K562 (cell line): ENCODE measurements at regions of chr12 and their contacts with region 1.

Region 1: DNA sequence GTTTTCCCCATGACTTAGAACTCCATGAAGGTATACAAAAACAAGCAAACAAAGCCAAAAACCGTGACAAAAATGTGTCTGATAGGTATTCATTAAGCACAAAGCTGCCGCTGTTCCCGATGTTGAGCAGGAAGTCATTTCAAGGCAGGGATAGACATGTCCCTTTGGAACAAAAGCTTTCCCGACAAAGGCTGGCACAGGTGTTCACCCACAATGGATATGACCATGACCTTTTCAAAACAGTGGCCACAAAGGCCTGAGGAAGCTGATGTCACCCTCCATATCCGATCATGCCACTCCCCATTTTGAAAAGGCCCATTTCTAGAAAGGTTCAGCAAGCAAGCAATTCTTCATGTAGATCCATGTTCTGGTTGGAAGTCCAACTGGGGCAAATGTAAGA is 279.1 kb downstream of the BTG1 start:
- DNase-seq: no peak
- ATAC-seq: no peak
- H3K4me3 ChIP-seq: no peak overlapping the region
- H3K27ac ChIP-seq: no peak overlapping the region
- H3K4me1 ChIP-seq: no peaks in the 10 kb centered on the region
- H3K27me3 ChIP-seq: no peaks in the 10 kb centered on the region
- CTCF ChIP-seq: no peak
- EP300 ChIP-seq: no peak
- POLR2A ChIP-seq: no peak
- RAD21 ChIP-seq: no peak

Region 2: DNA sequence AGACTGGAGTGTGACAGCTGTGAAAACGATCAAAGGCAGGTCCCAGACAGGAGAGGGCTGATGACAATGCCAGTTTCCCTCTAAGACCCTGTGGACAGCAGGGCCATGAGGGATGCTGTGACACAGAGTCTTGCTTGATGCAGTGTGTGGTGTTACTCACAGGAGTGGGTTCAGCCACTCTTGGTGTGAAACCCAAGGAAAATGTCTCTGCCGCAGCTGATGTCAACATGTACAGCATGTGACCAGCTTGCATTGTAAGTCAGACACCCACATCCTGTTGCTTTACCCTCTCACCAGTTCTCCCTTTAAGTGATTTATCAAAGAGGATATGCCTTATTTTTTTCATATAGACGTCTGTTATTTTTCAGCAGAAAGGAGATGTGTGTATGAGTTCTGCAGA is 10.5 kb after region 1 on chr12:
- CTCF ChIA-PET with region 1: no interaction called
- POLR2A ChIA-PET with region 1: interaction called, 10 read pairs
- in situ Hi-C with region 1: no loop called
- intact Hi-C with region 1: no loop called
- DNase-seq: no peak
- ATAC-seq: no peak
- H3K4me3 ChIP-seq: no peak overlapping the region
- H3K27ac ChIP-seq: no peak overlapping the region
- H3K4me1 ChIP-seq: no peaks in the 10 kb centered on the region
- H3K27me3 ChIP-seq: no peaks in the 10 kb centered on the region
- CTCF ChIP-seq: no peak
- EP300 ChIP-seq: no peak
- POLR2A ChIP-seq: no peak
- RAD21 ChIP-seq: no peak

Region 3: DNA sequence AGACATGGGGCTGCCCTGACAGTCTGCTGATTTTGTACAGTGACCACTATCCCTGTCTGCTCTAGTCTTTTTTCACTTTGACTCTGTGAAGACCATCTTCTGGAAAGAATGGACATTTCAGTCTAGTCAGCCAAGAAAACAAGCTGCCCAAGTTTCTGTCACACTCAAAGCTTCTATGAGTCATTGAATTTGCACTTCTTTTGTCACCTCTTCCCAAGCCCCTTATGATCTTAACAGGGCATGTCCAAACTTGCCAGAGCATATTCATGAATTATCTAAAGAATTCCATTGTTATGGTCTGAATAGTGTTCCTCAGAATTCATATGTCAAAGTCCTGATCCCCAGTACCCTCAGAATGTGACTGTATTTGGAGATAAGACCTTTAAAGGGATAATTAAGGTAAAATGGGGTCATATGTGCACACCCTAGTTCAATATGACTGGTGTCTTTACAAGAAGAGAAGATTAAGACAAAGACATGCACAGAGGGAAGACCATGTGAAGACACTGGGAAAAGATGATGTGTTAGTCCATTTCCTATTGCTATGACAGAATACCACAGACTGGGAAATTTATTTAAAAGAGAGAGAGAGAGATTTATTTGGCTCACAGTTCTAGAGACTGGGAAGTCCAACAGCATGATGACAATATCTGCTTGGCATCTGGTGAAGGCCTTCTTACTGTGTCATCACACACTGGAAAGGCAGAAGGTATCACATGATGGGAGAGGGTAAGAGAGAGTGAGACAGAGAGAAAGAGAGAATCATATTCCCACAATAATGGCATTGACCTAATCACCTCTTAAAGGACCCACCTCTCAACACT is 36.5 kb after region 1 on chr12:
- CTCF ChIA-PET with region 1: no interaction called
- POLR2A ChIA-PET with region 1: no interaction called
- in situ Hi-C with region 1: no loop called
- intact Hi-C with region 1: no loop called
- DNase-seq: no peak
- ATAC-seq: no peak
- H3K4me3 ChIP-seq: no peak overlapping the region
- H3K27ac ChIP-seq: no peak overlapping the region
- H3K4me1 ChIP-seq: no peaks in the 10 kb centered on the region
- H3K27me3 ChIP-seq: no peaks in the 10 kb centered on the region
- CTCF ChIP-seq: no peak
- EP300 ChIP-seq: no peak
- POLR2A ChIP-seq: no peak
- RAD21 ChIP-seq: no peak